GM10248 (cell line): ENCODE measurements at regions of chr2 and their contacts with region 1.

Region 1: DNA sequence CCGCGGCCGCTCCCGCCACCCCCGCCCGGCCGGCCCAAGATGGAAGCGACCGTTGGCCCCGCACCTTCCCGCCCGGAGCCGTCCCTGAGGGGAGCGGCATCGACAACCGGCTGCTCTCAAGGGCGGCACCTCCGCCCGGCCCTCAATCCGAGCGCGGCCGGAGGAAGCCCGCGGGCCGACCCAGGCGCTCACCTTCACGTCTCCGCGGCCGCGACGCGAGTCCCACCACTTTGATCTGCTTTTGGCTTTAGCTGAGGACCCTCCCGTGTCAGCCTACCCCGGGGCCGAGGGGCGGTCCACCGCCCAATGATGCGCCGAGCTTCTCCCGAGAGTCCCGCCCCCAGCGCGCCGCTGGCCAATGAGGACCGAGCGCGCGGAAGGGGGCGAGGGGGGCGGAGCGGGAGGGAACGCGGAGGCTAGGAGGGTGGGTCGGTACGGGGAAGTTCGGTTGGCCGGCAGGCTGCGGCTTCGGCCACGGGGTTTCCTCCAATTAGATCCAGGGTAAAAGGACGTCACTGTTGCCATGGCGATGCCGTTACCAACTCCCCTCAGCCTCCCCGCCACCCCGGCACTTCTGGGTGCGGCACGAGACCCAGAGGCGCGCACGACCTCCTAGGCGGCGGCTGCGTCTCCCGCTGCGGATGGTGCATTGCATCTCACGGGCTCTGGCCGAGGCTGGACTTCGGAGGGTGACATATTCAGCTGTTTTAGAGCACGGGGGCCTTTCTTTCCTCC is at the start of gene YWHAQ:
- DNase-seq: peak; percentile 99
- CTCF ChIP-seq: no peak

Region 2: GRCh38 chr2:9555297-9556141 is 75.4 kb before region 1 on chr2 and contains the start of gene ADAM17:
- CTCF ChIA-PET with region 1: interaction called, 5 read pairs
- POLR2A ChIA-PET with region 1: interaction called, 12 read pairs
- DNase-seq: peak; percentile 93
- CTCF ChIP-seq: peak; percentile 67

Region 3: DNA sequence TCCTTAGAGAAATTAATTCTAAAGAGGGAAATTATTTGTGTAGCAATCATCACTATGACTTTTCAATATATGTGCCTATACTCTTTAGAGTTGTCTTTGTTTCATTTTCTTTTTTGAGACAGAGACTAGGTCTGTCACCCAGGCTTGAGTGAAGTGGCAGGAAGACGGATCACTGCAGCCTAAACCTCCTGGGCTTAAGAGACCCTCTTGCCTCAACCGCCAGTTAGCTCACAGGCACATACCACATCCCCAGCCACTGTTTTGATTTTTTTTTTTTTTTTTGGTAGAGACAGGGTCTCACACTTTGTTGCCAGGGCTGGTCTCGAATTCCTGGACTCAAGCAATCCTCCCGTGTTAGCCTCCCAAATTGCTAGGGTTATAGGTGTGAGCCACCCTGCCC is 12.5 kb before region 1 on chr2:
- CTCF ChIA-PET with region 1: interaction called, 14 read pairs
- POLR2A ChIA-PET with region 1: interaction called, 13 read pairs
- DNase-seq: no peak
- CTCF ChIP-seq: no peak

Region 4: GRCh38 chr2:9648821-9649220 is 17.9 kb after region 1 on chr2:
- CTCF ChIA-PET with region 1: interaction called, 11 read pairs
- POLR2A ChIA-PET with region 1: no interaction called
- DNase-seq: no peak
- CTCF ChIP-seq: no peak

Region 5: DNA sequence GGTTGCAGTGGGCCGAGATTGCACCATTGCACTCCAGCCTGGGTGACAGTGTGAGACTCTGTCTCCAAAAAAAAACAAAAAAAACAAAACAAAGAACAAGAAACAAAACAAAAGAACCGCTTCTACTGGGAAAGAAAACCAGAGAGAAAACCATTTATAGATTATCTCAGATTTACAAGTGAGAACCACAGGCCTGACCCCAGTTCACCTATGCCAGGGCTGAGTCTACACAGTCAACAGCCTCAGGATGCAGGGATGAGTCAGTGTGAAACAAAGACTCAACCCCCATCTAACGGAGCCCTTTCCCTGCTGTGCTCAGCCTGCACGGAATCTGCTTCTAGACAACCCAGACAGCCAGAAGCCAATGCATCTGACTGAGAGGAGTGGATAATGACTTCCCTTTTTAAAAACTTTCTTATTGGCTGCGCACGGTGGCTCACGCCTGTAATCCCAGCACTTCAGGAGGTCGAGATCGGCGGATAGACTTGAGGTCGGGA is 25.4 kb after region 1 on chr2:
- CTCF ChIA-PET with region 1: interaction called, 4 read pairs
- POLR2A ChIA-PET with region 1: interaction called, 13 read pairs
- DNase-seq: peak; percentile 84
- CTCF ChIP-seq: no peak